CD8-positive, alpha-beta T cell (primary cell): ENCODE measurements at regions of chr4 and their contacts with region 1.

Region 1: DNA sequence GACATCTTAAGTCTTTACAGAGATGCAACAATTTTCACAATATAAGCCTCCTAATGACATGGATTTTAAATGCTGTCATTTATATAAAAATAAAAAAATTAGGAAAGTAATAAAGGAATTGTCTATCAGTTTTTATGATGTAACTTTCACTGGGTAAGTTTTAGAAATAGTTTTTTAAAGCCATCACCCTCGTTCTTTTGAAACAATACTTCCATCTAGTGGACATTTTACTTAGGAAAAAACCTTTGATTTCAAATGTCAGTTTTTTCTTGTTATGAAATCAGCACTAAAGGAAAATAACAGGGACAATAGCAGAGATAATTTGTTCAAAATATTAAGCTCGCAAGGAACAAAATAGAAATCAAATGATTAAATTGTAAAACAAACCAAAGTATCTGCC is 24.3 kb upstream of the NDNF start:
- DNase-seq: peak in 2 of 9 experiments; percentile 20 to 52
- ATAC-seq: no peak
- H3K4me3 ChIP-seq: no peak overlapping the region
- H3K4me3 Mint-ChIP-seq: no peak overlapping the region
- H3K27ac ChIP-seq: no peak overlapping the region
- H3K27ac Mint-ChIP-seq: no peak overlapping the region
- H3K4me1 ChIP-seq: no peaks in the 10 kb centered on the region
- H3K4me1 Mint-ChIP-seq: peaks cover 2% of the 10 kb centered on the region
- H3K27me3 ChIP-seq: no peaks in the 10 kb centered on the region
- H3K27me3 Mint-ChIP-seq: no peaks in the 10 kb centered on the region
- CTCF ChIP-seq: peak; percentile 77

Region 2: GRCh38 chr4:120850018-120850599 is 246.5 kb before region 1 on chr4:
- CTCF ChIA-PET with region 1: no interaction called
- POLR2A ChIA-PET with region 1: no interaction called
- intact Hi-C with region 1: loop called in 1 of 2 experiments (anchors 5 kb)
- DNase-seq: no peak
- ATAC-seq: no peak
- H3K4me3 ChIP-seq: no peak overlapping the region
- H3K4me3 Mint-ChIP-seq: no peak overlapping the region
- H3K27ac ChIP-seq: no peak overlapping the region
- H3K27ac Mint-ChIP-seq: no peak overlapping the region
- H3K4me1 ChIP-seq: no peaks in the 10 kb centered on the region
- H3K4me1 Mint-ChIP-seq: no peaks in the 10 kb centered on the region
- H3K27me3 ChIP-seq: no peaks in the 10 kb centered on the region
- H3K27me3 Mint-ChIP-seq: peaks cover 3% of the 10 kb centered on the region
- CTCF ChIP-seq: no peak